T-cell (primary cell): ENCODE measurements at regions of chr17 and their contacts with region 1.

Region 1: GRCh38 chr17:74318391-74318790 is 7.6 kb upstream of the KIF19 start:
- DNase-seq: no peak
- ATAC-seq: no peak
- H3K4me3 ChIP-seq: no peak overlapping the region
- H3K4me3 Mint-ChIP-seq: no peak overlapping the region
- H3K27ac ChIP-seq: no peak overlapping the region
- H3K27ac Mint-ChIP-seq: no peak overlapping the region
- H3K4me1 ChIP-seq: no peaks in the 10 kb centered on the region
- H3K4me1 Mint-ChIP-seq: no peaks in the 10 kb centered on the region
- H3K27me3 ChIP-seq: peaks cover 0 to 16% of the 10 kb centered on the region in 2 experiments
- H3K27me3 Mint-ChIP-seq: peaks cover 0 to 12% of the 10 kb centered on the region in 2 donors

Region 2: DNA sequence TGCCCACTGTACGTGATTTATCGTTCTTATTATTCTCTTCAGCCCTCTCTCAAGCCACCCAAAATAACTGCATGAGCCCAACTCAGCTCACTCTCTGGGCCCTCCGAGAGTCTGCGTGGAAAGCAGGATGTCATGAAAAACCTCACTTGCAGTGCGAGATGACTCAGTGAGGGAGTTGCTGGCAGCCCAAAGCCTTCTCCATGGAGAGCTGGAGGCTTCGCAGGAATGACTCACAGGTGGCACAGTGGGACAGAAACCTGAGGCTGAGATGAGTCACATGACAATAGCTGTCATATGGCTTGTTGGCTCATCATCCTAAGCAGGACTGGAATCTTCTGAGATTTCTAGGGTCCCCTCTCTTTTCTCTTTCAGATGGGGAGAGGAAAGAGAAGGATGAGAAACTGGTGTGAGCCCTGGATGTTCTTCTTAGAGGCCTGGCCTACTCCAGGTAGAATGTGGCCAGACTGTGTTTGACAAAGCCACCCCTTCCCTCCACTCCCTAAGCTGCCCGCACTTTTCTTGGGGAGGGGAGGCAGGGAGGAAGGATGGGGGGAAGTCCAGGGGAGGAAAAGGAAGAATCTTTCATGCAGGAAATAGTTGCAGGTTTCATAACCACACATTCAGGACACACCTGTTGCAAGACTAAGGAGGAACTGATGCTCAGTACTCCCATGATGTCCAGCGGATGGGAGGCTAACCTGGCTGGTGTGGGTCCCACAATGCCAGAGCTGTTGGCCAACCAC is 275.5 kb before region 1 on chr17:
- CTCF ChIA-PET with region 1: interaction called in 1 of 2 experiments, 10 read pairs
- POLR2A ChIA-PET with region 1: no interaction called
- DNase-seq: no peak
- ATAC-seq: no peak
- H3K4me3 ChIP-seq: no peak overlapping the region
- H3K4me3 Mint-ChIP-seq: no peak overlapping the region
- H3K27ac ChIP-seq: no peak overlapping the region
- H3K27ac Mint-ChIP-seq: no peak overlapping the region
- H3K4me1 ChIP-seq: no peaks in the 10 kb centered on the region
- H3K4me1 Mint-ChIP-seq: peaks cover 0 to 3% (median 2%) of the 10 kb centered on the region in 3 donors
- H3K27me3 ChIP-seq: peaks cover 0 to 17% of the 10 kb centered on the region in 2 experiments
- H3K27me3 Mint-ChIP-seq: peaks cover 3 to 18% of the 10 kb centered on the region in 2 donors